Right cardiac atrium (tissue), 5 donors: ENCODE measurements at regions of chr6 and their contacts with region 1.

Region 1: DNA sequence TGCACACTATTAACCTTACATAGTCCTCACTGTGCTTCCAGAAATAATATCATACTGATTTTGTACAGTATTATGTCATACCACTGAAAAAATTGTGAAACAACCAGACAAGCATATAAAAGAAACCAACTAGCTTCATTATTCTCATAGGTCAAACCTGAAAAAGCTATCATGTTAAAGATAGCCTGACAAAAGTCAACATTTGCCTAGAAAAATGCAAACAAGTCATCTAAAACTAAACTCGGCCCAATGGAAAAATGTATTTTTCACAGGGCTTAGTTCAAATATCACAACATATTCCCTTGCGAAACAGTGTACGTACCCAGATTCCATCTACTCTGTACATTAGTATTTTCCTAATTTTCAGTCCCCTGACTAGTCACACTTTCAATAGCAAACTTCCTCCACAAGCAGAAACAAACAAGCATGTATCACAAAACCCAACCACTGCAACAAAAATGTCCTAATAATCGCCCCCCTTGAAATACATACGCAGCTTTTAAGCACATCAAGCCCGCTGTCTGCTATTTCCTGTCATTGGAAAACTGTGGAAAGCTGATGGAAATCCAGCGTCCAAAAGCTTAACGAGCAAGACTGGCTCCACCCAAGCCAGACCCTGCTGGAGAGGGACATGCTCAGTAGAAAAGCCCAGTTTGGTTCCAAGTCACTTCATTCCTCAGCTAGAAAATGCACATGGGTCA is 93.1 kb downstream of the EPB41L2 start:
- DNase-seq: peak; percentile 45 to 78 (median 73)
- ATAC-seq: peak; percentile 85 to 92
- H3K4me3 ChIP-seq: peak overlapping the region; percentile 88
- H3K27ac ChIP-seq: peak overlapping the region; percentile 75
- H3K4me1 ChIP-seq: peaks cover 7% of the 10 kb centered on the region
- H3K27me3 ChIP-seq: no peaks in the 10 kb centered on the region

Region 2: GRCh38 chr6:130620338-130620781 is 349.6 kb before region 1 on chr6:
- intact Hi-C with region 1: no loop called
- DNase-seq: no peak
- ATAC-seq: no peak
- H3K4me3 ChIP-seq: no peak overlapping the region
- H3K27ac ChIP-seq: no peak overlapping the region
- H3K4me1 ChIP-seq: no peaks in the 10 kb centered on the region
- H3K27me3 ChIP-seq: no peaks in the 10 kb centered on the region

Region 3: GRCh38 chr6:131042664-131043063 is 72.7 kb after region 1 on chr6:
- intact Hi-C with region 1: loop called in 1 of 4 experiments (anchors 10 kb)
- DNase-seq: peak in 1 of 3 donors; percentile 64
- ATAC-seq: peak in 1 of 2 donors; percentile 47
- H3K4me3 ChIP-seq: no peak overlapping the region
- H3K27ac ChIP-seq: no peak overlapping the region
- H3K4me1 ChIP-seq: no peaks in the 10 kb centered on the region
- H3K27me3 ChIP-seq: no peaks in the 10 kb centered on the region